GM10248 (cell line): ENCODE measurements at regions of chr3 and their contacts with region 1.

Region 1: DNA sequence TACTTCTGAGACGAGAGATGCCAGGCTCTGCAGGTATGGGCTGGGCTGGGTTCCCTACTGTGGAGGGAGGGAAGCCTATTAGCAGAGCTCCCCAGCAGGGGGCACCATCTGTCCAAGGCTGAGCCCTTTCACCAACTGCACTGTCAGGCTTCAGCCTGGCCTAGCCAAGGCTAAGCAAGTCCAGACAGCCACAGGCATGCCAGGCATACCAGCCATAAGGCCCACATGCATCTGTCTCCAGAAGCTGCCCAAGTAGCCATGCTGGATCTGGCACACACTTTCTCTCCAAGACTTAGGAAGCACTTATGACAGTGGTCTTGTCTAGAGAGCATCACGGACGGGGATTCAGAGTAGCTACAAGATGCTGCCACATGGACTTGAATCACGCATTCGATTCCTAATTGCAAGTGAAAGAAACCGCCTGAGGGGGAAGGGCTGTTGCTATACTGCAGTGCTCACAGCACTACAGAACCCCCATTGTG is 28.3 kb downstream of the RUVBL1 start:
- DNase-seq: peak; percentile 84
- CTCF ChIP-seq: peak; percentile 88

Region 2: GRCh38 chr3:127822698-127823425 is 272.4 kb before region 1 on chr3:
- CTCF ChIA-PET with region 1: no interaction called
- POLR2A ChIA-PET with region 1: no interaction called
- DNase-seq: peak; percentile 62
- CTCF ChIP-seq: peak; percentile 23

Region 3: DNA sequence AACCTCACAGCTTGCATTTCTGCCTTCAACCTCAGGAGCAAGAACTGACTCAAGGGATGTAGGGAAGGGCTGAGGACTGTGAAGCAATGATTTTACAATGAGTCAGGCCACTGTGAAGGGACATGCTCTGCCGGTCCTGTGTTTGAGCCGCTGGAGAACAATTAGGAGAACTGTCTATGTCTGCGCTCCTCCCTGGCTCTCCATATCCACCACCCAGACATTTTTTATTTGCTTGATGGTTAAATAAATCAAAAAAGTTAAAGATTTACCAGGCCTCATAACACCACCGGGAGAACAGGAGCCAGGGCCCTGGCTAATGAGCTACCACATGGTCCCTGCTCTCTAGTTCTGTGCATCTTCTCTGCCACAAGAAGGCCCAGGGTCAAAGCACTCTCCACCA is 13.4 kb before region 1 on chr3:
- CTCF ChIA-PET with region 1: interaction called, 70 read pairs
- POLR2A ChIA-PET with region 1: no interaction called
- DNase-seq: no peak
- CTCF ChIP-seq: no peak

Region 4: GRCh38 chr3:128123538-128124368 is 28.5 kb after region 1 on chr3 and contains the start of gene RUVBL1:
- CTCF ChIA-PET with region 1: interaction called, 32 read pairs
- POLR2A ChIA-PET with region 1: no interaction called
- DNase-seq: peak; percentile 99
- CTCF ChIP-seq: no peak

Region 5: DNA sequence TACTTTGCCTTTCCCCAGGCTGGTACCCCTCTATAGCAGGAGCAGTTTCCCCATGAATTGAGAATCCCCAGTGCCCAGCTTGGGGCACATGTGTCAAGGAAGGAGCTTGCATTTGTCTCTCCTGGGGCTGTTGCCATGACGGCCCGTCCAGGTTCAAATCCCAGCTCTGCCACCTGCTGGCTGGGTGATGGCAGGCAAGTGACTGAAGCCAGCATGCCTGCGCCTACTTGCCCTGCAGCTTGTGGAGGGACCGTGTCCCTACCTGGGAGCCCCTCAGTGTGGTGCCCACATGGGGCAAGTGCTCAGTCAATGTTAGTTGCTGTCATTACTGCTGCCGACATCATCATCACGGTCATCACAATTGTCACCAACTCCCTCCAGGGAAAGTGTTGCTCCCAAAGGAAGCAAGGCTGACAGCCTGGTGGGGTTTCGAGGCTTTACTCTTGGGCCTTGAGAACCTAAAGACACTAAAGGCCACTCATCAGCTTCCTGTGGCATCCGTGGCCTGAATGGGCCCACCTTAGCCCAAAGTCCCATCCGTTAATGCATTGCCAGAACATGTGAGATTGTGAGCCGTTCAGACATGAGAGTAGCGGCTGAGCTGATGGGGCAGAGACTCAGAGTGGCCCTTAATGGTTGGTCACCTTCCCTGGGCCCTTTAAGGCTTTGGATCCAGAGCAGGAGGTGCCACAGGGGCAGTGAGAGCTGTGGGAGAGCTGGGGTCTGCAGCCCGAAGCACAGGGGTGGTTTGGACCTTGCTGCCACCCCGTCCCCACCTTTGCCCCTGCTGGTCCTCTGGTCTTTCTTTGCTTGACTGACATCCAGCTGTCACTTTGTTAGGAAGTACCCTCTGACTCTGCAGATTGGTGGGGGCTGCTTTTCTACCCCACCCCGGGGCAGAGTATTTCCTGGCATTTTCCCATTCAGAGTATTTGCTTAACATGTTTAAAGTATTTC is 227.1 kb after region 1 on chr3:
- CTCF ChIA-PET with region 1: interaction called, 30 read pairs
- POLR2A ChIA-PET with region 1: no interaction called
- DNase-seq: peak; percentile 40
- CTCF ChIP-seq: peak; percentile 50

Region 6: DNA sequence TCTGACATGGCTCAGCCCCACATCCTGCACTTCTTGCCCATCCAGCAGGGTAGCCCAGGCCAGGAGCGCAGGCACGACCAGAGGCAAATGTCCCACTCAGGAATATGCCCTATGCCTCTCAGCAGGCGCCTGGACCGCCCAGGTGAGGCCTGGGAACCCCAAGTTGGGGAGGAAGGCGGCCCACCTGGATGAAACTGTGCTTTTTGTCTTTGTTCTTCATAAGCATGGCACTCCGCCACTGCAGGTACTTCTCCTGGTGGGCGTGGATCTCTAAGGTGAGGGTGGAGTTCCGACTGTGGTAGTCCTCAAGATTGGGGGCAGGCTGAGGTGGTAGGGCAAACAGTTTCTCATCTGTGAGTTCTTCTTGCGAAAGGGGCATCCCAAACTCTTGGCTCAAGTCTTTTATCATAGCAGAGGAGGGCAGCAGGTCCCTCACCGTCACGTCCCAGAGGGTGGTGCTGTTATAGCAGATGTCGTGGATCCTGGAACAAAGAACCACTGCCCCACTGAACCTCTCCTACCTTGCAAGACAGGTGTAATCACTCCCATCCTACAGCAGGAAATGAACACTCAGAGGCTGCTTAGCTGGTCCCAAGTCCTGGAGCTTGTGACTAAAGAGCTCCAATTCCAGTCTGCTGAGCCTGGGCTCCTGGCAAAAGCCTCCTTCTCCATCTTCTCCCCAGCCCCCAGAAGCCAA is 837.4 kb after region 1 on chr3:
- CTCF ChIA-PET with region 1: no interaction called
- POLR2A ChIA-PET with region 1: no interaction called
- DNase-seq: no peak
- CTCF ChIP-seq: no peak